ENCODE measurements at regions of chr4 and their contacts with region 1.

Region 1: GRCh38 chr4:80202190-80202711 is 4.9 kb downstream of the PRDM8 start:
- DNase-seq: peak; percentile 58 to 86 (median 80)
- ATAC-seq: peak; percentile 62
- H3K4me3 ChIP-seq: peak overlapping the region; percentile 67 to 75
- H3K4me3 Mint-ChIP-seq: peak overlapping the region; percentile 83
- H3K27ac ChIP-seq: peak overlapping the region; percentile 48 to 66
- H3K27ac Mint-ChIP-seq: peak overlapping the region; percentile 73
- H3K4me1 ChIP-seq: peaks cover 16% of the 10 kb centered on the region
- H3K4me1 Mint-ChIP-seq: peaks cover 24% of the 10 kb centered on the region
- H3K27me3 ChIP-seq: peaks cover 0 to 4% of the 10 kb centered on the region in 2 experiments
- H3K27me3 Mint-ChIP-seq: peaks cover 10% of the 10 kb centered on the region
- CTCF ChIP-seq: peak; percentile 78

Region 2: DNA sequence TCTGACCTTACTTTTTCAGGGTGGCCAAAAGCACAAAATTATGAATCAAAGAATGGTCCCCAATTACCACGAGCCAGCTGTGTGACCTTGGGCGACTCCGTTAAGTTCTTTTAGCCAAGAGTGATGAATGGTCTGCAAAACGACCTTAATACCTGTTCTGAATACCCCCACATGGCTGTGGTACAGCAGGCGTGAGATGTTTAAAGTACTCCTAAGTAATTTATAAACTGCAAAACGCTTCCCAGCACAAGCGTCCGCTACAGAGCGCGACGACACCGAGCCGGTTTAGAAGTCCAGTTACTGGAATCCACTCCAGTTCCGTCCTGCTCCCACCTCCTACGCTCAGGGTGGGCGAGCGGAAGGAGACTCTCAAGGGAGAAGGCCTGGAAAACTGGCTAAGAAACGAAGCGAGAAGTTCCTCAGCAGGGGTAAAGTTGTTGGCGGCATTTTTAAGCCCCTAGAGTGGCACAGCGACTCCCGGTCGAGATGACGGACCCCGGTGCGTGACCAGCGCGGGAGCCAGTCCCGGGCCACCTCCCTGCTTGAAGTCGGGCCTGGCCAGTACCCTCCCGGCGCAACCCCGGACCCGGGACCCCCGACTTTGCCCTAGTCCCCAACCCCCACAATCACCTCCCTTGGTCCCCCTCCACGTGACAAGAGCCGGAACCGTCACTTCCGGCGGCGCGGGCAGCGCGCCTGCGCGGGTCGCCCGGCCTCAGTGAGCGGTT is 1426.8 kb before region 1 on chr4:
- CTCF ChIA-PET with region 1: no interaction called
- POLR2A ChIA-PET with region 1: no interaction called
- intact Hi-C with region 1: loop called (anchors 5 to 10 kb)
- DNase-seq: peak; percentile 75 to 93 (median 86)
- ATAC-seq: peak; percentile 57
- H3K4me3 ChIP-seq: peak overlapping the region; percentile 87
- H3K4me3 Mint-ChIP-seq: peak overlapping the region; percentile 92
- H3K27ac ChIP-seq: peak overlapping the region; percentile 82 to 87
- H3K27ac Mint-ChIP-seq: peak overlapping the region; percentile 94
- H3K4me1 ChIP-seq: peaks cover 17% of the 10 kb centered on the region
- H3K4me1 Mint-ChIP-seq: peaks cover 16% of the 10 kb centered on the region
- H3K27me3 ChIP-seq: no peaks in the 10 kb centered on the region
- H3K27me3 Mint-ChIP-seq: no peaks in the 10 kb centered on the region
- CTCF ChIP-seq: no peak

Region 3: DNA sequence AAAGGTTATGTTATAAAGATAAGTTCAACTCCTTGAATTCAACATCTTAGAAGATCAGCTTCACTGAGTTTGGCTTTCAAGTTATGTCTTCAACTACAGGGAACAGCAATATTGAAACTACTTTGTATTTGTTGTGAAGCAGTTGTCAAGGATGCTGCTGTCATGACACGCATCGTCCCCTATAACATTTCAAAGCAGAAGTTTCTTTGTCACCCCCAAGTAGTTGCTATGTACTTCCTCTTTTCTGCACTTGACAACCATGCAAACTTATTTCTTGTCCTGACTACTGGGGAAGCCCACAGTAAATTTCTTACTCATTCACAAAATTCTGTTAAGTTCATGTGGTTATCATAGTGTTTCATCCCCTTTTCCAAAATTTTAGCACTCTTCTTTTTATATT is 143.5 kb before region 1 on chr4:
- CTCF ChIA-PET with region 1: interaction called, 4 read pairs
- POLR2A ChIA-PET with region 1: no interaction called
- intact Hi-C with region 1: loop called in 1 of 2 experiments (anchors 5 kb)
- DNase-seq: peak in 5 of 9 experiments; percentile 35 to 93 (median 56)
- ATAC-seq: peak; percentile 91
- H3K4me3 ChIP-seq: peak overlapping the region; percentile 4 to 18
- H3K4me3 Mint-ChIP-seq: peak overlapping the region; percentile 74
- H3K27ac ChIP-seq: peak overlapping the region; percentile 86 to 87
- H3K27ac Mint-ChIP-seq: peak overlapping the region; percentile 94
- H3K4me1 ChIP-seq: peaks cover 13% of the 10 kb centered on the region
- H3K4me1 Mint-ChIP-seq: peaks cover 23% of the 10 kb centered on the region
- H3K27me3 ChIP-seq: no peaks in the 10 kb centered on the region
- H3K27me3 Mint-ChIP-seq: no peaks in the 10 kb centered on the region
- CTCF ChIP-seq: no peak

Region 4: GRCh38 chr4:80125252-80126177 is 76.7 kb before region 1 on chr4:
- CTCF ChIA-PET with region 1: interaction called, 31 read pairs
- POLR2A ChIA-PET with region 1: interaction called, 18 read pairs
- intact Hi-C with region 1: loop called (anchors 1 to 2 kb)
- DNase-seq: peak in 8 of 9 experiments; percentile 17 to 83 (median 42)
- ATAC-seq: peak; percentile 81
- H3K4me3 ChIP-seq: no peak overlapping the region
- H3K4me3 Mint-ChIP-seq: peak overlapping the region; percentile 44
- H3K27ac ChIP-seq: peak overlapping the region; percentile 56 to 84
- H3K27ac Mint-ChIP-seq: peak overlapping the region; percentile 83
- H3K4me1 ChIP-seq: peaks cover 37% of the 10 kb centered on the region
- H3K4me1 Mint-ChIP-seq: peaks cover 49% of the 10 kb centered on the region
- H3K27me3 ChIP-seq: no peaks in the 10 kb centered on the region
- H3K27me3 Mint-ChIP-seq: no peaks in the 10 kb centered on the region
- CTCF ChIP-seq: peak; percentile 72

Region 5: DNA sequence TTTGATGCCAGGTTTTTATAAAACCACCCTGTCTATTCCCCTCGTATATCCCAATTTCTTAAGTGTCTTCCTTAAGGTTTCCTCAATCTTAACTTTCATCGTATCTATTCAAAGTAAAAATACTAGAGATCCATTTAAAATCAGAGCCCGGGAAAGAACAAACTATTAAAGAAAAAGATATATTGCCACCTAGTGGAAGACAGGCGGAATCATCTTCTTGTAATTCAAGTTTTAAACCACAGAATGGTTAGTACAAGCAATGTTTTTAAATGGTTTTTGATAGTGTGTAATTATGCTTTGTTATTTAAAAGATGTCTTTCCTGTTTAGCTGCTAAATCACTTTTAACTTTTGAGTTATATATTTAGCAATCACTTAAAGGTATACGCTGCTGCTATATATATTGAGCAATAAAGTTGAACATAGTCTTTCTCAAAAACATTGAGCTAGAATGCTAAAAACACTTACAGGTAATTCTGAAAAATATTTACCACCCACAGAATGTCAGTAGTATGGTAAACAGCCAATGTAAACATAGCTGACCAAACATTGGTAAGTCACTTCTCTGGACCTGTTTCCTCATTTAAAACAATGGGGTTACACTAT is 13.3 kb after region 1 on chr4:
- CTCF ChIA-PET with region 1: interaction called, 28 read pairs
- POLR2A ChIA-PET with region 1: interaction called, 9 read pairs
- intact Hi-C with region 1: loop called in 1 of 2 experiments (anchors 1 kb)
- DNase-seq: peak in 2 of 9 experiments; percentile 28 to 56
- ATAC-seq: no peak
- H3K4me3 ChIP-seq: no peak overlapping the region
- H3K4me3 Mint-ChIP-seq: no peak overlapping the region
- H3K27ac ChIP-seq: no peak overlapping the region
- H3K27ac Mint-ChIP-seq: no peak overlapping the region
- H3K4me1 ChIP-seq: no peaks in the 10 kb centered on the region
- H3K4me1 Mint-ChIP-seq: peaks cover 1% of the 10 kb centered on the region
- H3K27me3 ChIP-seq: no peaks in the 10 kb centered on the region
- H3K27me3 Mint-ChIP-seq: peaks cover 25% of the 10 kb centered on the region
- CTCF ChIP-seq: peak; percentile 91